Endothelial cell of umbilical vein (primary cell): ENCODE measurements at regions of chr14 and their contacts with region 1.

Region 1: GRCh38 chr14:49585803-49586672 is at the start of gene RPS29:
- DNase-seq: peak; percentile 100
- H3K4me3 ChIP-seq: peak within 1 kb of the TSS; percentile 90 to 99 (median 97)
- H3K27ac ChIP-seq: peak within 1 kb of the TSS; percentile 82
- H3K4me1 ChIP-seq: peaks cover 10% of the 10 kb centered on the region
- H3K27me3 ChIP-seq: no peaks in the 10 kb centered on the region
- CTCF ChIP-seq: no peak
- POLR2A ChIP-seq: peak; percentile 95
- total RNA-seq, gene RPS29: 1,408 and 1,453 TPM in 2 replicates

Region 2: DNA sequence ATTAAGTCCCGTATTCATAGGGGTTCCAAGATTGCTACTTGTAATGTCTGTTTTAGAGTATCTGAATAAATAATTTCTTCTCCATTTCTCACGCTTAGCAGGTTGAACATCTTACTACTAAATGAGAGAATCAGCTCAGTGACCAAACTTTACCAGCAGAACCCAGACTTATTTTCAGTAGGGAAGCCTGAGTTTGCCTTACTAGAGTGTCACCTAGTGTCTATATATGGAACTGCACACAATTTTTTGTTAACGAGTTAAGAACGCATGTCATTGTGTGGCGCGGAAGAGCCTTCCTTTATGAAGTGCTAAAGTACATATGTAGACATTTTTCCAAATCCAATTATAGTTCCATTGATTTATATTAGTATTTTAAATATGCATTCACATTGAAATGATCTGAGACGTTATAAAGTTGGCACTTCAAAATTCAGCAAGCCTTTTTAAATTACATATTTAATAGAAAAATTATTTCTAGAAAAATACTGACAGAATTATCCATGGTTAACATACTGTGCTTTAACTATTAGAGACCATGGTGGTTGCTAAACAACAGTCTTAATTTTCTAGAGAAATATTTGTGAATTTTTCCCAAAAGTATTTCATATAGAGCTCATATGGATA is 88.2 kb before region 1 on chr14:
- CTCF ChIA-PET with region 1: interaction called, 4 read pairs
- POLR2A ChIA-PET with region 1: no interaction called
- dilution Hi-C with region 1: no loop called
- intact Hi-C with region 1: loop called (anchors 5 kb)
- DNase-seq: peak; percentile 78
- H3K4me3 ChIP-seq: no peak overlapping the region
- H3K27ac ChIP-seq: no peak overlapping the region
- H3K4me1 ChIP-seq: no peaks in the 10 kb centered on the region
- H3K27me3 ChIP-seq: peaks cover 7 to 9% of the 10 kb centered on the region in 2 experiments
- CTCF ChIP-seq: peak; percentile 53 to 63
- POLR2A ChIP-seq: no peak

Region 3: GRCh38 chr14:49598485-49599300 is 12.7 kb after region 1 on chr14 and contains the start of gene LRR1:
- CTCF ChIA-PET with region 1: interaction called, 29 read pairs
- POLR2A ChIA-PET with region 1: interaction called, 12 read pairs
- dilution Hi-C with region 1: no loop called
- intact Hi-C with region 1: loop called (anchors 1 kb)
- DNase-seq: peak; percentile 90
- H3K4me3 ChIP-seq: peak within 1 kb of the TSS; percentile 57 to 100 (median 97)
- H3K27ac ChIP-seq: peak within 1 kb of the TSS; percentile 91
- H3K4me1 ChIP-seq: peaks cover 3% of the 10 kb centered on the region
- H3K27me3 ChIP-seq: no peaks in the 10 kb centered on the region
- CTCF ChIP-seq: no peak
- POLR2A ChIP-seq: peak; percentile 83
- total RNA-seq, gene LRR1: 30.1 and 30.9 TPM in 2 replicates

Region 4: DNA sequence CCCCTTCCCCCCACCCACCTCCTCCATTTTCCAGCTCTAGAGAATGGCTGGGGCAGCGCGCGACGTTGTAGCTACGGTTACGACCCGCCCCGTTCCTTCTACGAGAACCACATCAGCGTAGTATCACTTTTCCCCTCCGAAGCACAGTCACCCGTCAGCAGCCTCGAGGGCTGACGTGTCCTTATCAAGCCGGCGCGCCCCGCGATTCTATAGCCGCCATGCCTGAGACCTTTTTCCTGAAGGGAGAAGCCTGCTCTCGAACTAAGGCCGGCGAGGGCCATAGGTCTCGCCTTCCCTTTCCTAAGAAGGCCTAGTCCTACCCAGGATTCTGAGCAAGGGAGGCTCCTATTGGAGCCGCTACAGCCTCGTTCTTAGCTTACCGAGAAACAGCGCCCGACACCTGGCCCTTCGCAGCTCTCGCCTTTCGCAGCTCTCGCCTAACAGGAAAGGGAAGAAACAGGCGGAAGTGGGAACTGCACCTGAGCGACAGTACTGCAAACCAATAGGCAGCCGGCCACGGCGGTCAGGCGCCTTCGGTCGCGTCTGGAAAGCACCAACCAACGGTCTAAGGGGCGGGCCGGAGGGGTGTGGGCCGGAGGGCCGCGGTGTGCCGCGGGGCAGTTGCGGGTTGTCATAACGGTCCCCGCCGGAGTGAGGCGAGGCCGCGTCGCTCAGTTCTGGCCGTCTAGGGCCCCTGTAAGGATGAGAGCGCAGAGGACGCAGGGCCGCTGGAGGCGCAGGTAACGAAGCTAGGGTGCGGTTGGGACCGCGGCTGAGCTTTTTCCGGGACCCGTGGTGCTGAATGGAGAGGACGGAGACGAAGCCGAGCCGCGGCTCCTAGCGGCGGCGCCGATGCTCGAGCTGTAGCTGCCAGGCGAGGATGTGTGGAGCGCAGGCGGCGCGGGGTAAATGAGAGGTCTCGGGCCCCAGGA is 34.4 kb after region 1 on chr14 and contains the starts of genes MGAT2 and RPL36AL:
- CTCF ChIA-PET with region 1: interaction called, 25 read pairs
- POLR2A ChIA-PET with region 1: interaction called, 10 read pairs
- dilution Hi-C with region 1: no loop called
- intact Hi-C with region 1: loop called (anchors 1 kb)
- DNase-seq: peak; percentile 99
- H3K4me3 ChIP-seq: peak within 1 kb of the TSS; percentile 59 to 95 (median 83)
- H3K27ac ChIP-seq: peak within 1 kb of the TSS; percentile 85
- H3K4me1 ChIP-seq: peaks cover 40% of the 10 kb centered on the region
- H3K27me3 ChIP-seq: no peaks in the 10 kb centered on the region
- CTCF ChIP-seq: peak; percentile 8 to 51
- POLR2A ChIP-seq: peak; percentile 94
- total RNA-seq, gene MGAT2: 68.1 and 72.6 TPM in 2 replicates
- total RNA-seq, gene RPL36AL: 251 and 260 TPM in 2 replicates

Region 5: GRCh38 chr14:49692811-49693734 is 107.0 kb after region 1 on chr14 and contains the start of gene KLHDC1:
- CTCF ChIA-PET with region 1: no interaction called
- POLR2A ChIA-PET with region 1: no interaction called
- dilution Hi-C with region 1: no loop called
- intact Hi-C with region 1: loop called (anchors 2 kb)
- DNase-seq: peak; percentile 85
- H3K4me3 ChIP-seq: peak within 1 kb of the TSS; percentile 48 to 91 (median 72)
- H3K27ac ChIP-seq: peak within 1 kb of the TSS; percentile 10
- H3K4me1 ChIP-seq: peaks cover 9% of the 10 kb centered on the region
- H3K27me3 ChIP-seq: no peaks in the 10 kb centered on the region
- CTCF ChIP-seq: no peak
- POLR2A ChIP-seq: peak; percentile 95
- total RNA-seq, gene KLHDC1: 1.2 and 1.6 TPM in 2 replicates

Region 6: DNA sequence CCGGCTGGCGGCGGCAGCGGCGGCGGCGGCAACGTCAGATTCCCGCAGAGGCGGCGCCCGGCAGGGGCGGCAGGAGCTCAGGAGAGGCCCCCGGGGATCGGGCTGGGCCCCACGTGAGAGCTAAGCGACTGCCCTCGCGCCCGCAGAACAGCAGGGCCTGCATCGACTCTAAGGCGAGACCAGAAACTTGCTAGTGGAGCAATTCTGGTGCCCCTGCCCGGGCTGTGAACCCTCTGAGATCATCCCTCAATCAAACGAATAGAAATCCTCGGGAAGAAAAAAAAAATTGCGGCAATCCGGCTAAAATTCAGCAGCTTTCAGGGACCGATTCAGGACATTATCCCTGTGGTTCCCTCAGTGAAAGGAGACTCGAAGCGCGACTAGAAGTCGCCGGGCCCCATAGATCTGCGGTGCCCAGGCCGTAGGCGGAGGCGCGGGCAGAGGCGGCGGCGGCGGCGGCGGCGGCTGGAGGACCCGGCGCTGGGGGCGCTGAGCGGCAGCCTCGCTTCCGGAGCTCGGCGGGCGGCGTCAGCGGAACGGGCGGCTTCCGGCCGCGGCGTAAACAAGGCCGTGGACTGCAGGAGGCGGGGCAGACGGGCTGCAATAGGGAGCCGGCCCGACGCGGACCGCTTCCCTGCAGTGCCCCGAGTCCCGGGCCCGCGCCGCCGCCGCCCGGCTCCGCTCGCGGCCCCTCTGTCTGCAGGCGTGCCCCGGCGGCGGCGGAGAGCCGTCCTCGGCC is 181.7 kb after region 1 on chr14 and contains the start of gene KLHDC2:
- CTCF ChIA-PET with region 1: no interaction called
- POLR2A ChIA-PET with region 1: interaction called, 3 read pairs
- dilution Hi-C with region 1: no loop called
- intact Hi-C with region 1: loop called (anchors 1 kb)
- DNase-seq: peak; percentile 88
- H3K4me3 ChIP-seq: peak within 1 kb of the TSS; percentile 68 to 86 (median 75)
- H3K27ac ChIP-seq: peak within 1 kb of the TSS; percentile 86
- H3K4me1 ChIP-seq: peaks cover 16% of the 10 kb centered on the region
- H3K27me3 ChIP-seq: no peaks in the 10 kb centered on the region
- CTCF ChIP-seq: peak in 1 of 2 donors; percentile 34
- POLR2A ChIP-seq: peak; percentile 81
- total RNA-seq, gene KLHDC2: 29.2 and 30.2 TPM in 2 replicates